H1 (cell line): ENCODE measurements at regions of chr10 and their contacts with region 1.

Region 1: DNA sequence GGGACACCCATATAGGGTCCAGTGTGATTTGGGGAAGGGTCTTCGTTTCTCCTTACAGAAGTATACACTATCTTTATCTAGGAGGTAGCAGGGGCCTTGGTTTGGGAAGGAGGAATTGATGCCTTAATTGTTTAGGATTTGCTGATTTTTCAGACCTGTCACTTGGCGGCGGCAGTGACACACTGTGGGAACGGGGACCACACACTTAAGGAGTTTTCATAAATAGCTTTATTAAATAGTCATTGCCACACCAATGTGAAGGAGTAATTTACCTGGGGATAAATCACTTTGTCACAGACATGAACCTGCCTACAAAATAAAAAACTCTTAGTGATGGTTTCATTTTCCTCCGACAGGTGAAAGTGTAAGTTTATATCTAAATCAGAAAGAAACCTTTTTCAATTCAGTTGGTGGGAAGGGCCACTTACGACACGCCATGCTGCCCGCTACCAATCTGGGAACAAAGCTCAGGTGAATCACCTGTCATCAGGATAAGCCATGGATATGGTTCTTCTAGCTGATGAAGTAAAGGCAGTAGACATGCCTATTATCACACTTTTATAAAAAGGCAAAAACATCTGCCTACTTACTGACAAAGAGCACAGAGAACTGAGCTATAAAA is 12.3 kb upstream of the ENO4 start:
- DNase-seq: no peak
- H3K4me3 ChIP-seq: no peak overlapping the region
- H3K27ac ChIP-seq: no peak overlapping the region
- H3K4me1 ChIP-seq: peaks cover 29 to 50% (median 41%) of the 10 kb centered on the region in 4 experiments
- H3K27me3 ChIP-seq: no peaks in the 10 kb centered on the region
- CTCF ChIP-seq: peak in 2 of 3 experiments; percentile 12 to 22; a peak in 2 of 4 replicates
- EP300 ChIP-seq: no peak
- POLR2A ChIP-seq: no peak
- RAD21 ChIP-seq: peak; percentile 54 to 61

Region 2: GRCh38 chr10:116809483-116810119 is 27.4 kb before region 1 on chr10:
- CTCF ChIA-PET with region 1: interaction called, 20 read pairs
- POLR2A ChIA-PET with region 1: interaction called, 7 read pairs
- DNase-seq: peak in 1 of 2 experiments; percentile 81
- H3K4me3 ChIP-seq: no peak overlapping the region
- H3K27ac ChIP-seq: no peak overlapping the region
- H3K4me1 ChIP-seq: peaks cover 0 to 2% (median 0%) of the 10 kb centered on the region in 4 experiments; a peak in 2 of 7 replicates
- H3K27me3 ChIP-seq: no peaks in the 10 kb centered on the region
- CTCF ChIP-seq: peak; percentile 52 to 82 (median 62)
- EP300 ChIP-seq: no peak
- POLR2A ChIP-seq: no peak
- RAD21 ChIP-seq: peak; percentile 34 to 48; a peak in 3 of 4 replicates

Region 3: DNA sequence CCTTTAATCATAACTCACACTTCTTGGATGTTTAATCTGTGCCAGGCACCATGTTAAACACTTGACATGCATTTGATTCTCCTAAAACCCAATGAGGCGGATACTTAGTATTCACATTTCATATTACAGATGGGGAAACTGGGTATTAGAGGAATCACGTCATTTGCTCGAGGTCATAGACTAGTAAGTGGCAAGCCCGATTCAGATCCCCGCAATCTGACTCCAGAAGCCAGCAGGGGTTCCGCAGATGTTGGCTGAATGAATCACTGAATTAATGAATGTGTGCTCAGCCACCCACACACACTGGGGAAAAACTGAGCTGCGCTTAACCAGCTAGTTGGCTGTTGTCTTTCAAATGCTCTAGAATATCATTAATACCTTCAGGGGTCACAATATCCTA is 10.2 kb before region 1 on chr10:
- CTCF ChIA-PET with region 1: interaction called, 16 read pairs
- POLR2A ChIA-PET with region 1: interaction called, 8 read pairs
- DNase-seq: no peak
- H3K4me3 ChIP-seq: no peak overlapping the region
- H3K27ac ChIP-seq: no peak overlapping the region
- H3K4me1 ChIP-seq: peaks cover 0 to 8% (median 4%) of the 10 kb centered on the region in 4 experiments; a peak in 4 of 7 replicates
- H3K27me3 ChIP-seq: no peaks in the 10 kb centered on the region
- CTCF ChIP-seq: no peak
- EP300 ChIP-seq: no peak
- POLR2A ChIP-seq: no peak
- RAD21 ChIP-seq: no peak

Region 4: GRCh38 chr10:116849248-116850057 is 12.4 kb after region 1 on chr10 and contains the start of gene ENO4:
- CTCF ChIA-PET with region 1: interaction called, 5 read pairs
- POLR2A ChIA-PET with region 1: interaction called, 21 read pairs
- DNase-seq: peak; percentile 75 to 92
- H3K4me3 ChIP-seq: peak within 1 kb of the TSS; percentile 54 to 91 (median 82)
- H3K27ac ChIP-seq: peak within 1 kb of the TSS; percentile 48; the same call in 1 of the 2 replicates
- H3K4me1 ChIP-seq: peaks cover 7 to 23% (median 14%) of the 10 kb centered on the region in 4 experiments; a peak in 5 of 7 replicates
- H3K27me3 ChIP-seq: peaks cover 0 to 11% (median 2%) of the 10 kb centered on the region in 4 experiments; a peak in 2 of 7 replicates
- CTCF ChIP-seq: no peak
- EP300 ChIP-seq: no peak
- POLR2A ChIP-seq: peak in 1 of 2 experiments; percentile 71; a peak in 2 of 3 replicates
- RAD21 ChIP-seq: peak in 1 of 2 experiments; percentile 9; a peak in 1 of 4 replicates
- total RNA-seq, gene ENO4: 0.21 TPM in 1 of 2 replicates, not detected in the other

Region 5: GRCh38 chr10:116870949-116871348 is 33.9 kb after region 1 on chr10:
- CTCF ChIA-PET with region 1: no interaction called
- POLR2A ChIA-PET with region 1: no interaction called
- DNase-seq: no peak
- H3K4me3 ChIP-seq: no peak overlapping the region
- H3K27ac ChIP-seq: no peak overlapping the region
- H3K4me1 ChIP-seq: peaks cover 0 to 18% (median 6%) of the 10 kb centered on the region in 4 experiments; a peak in 4 of 7 replicates
- H3K27me3 ChIP-seq: peaks cover 0 to 1% (median 0%) of the 10 kb centered on the region in 4 experiments; a peak in 2 of 7 replicates
- CTCF ChIP-seq: no peak
- EP300 ChIP-seq: no peak
- POLR2A ChIP-seq: no peak
- RAD21 ChIP-seq: no peak